CD4-positive, alpha-beta T cell (primary cell): ENCODE measurements at regions of chr4 and their contacts with region 1.

Region 1: DNA sequence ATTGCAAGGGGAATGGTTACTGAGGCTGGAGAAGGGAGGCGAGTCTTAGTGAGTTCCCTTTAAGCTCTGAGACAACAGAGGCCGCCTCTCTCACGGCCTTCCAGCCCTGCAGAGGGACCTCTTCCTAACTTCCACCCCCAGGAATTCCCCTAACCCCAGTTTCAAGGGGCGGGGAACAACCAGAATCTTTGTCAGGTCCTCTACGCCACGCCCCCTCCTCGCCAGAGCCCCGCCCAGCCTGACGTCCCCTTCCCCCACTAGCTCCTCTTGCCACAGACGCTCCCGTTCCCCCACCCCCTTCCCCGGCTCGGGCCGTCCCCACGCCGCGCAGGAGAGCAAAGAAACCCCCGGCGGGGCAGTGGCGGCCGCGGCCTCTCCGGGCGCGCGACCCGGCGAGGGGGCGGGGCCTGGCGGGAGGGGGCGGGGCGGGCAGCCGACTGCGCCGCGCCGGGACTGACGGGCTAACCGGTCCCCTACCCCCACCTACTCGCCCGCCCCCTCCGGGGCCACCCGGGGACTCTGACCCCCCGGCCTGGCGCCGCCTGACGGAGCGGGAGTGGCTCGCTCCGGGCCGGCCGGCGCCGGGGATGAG is 12.3 kb upstream of the TMEM156 start:
- DNase-seq: peak; percentile 87 to 99 (median 94)
- ATAC-seq: peak; percentile 83
- H3K4me3 ChIP-seq: peak overlapping the region; percentile 72
- H3K4me3 Mint-ChIP-seq: peak overlapping the region; percentile 98
- H3K27ac ChIP-seq: peak overlapping the region; percentile 85 to 86
- H3K27ac Mint-ChIP-seq: peak overlapping the region; percentile 97
- H3K4me1 ChIP-seq: peaks cover 36% of the 10 kb centered on the region
- H3K4me1 Mint-ChIP-seq: peaks cover 54% of the 10 kb centered on the region
- H3K27me3 ChIP-seq: no peaks in the 10 kb centered on the region
- H3K27me3 Mint-ChIP-seq: no peaks in the 10 kb centered on the region
- CTCF ChIP-seq: no peak

Region 2: GRCh38 chr4:38902695-38903094 is 141.8 kb before region 1 on chr4:
- CTCF ChIA-PET with region 1: interaction called, 9 read pairs
- POLR2A ChIA-PET with region 1: interaction called, 4 read pairs
- intact Hi-C with region 1: loop called in 1 of 2 experiments (anchors 1 kb)
- DNase-seq: peak in 3 of 14 experiments; percentile 64 to 67 (median 66)
- ATAC-seq: peak; percentile 89
- H3K4me3 ChIP-seq: no peak overlapping the region
- H3K4me3 Mint-ChIP-seq: no peak overlapping the region
- H3K27ac ChIP-seq: no peak overlapping the region
- H3K27ac Mint-ChIP-seq: no peak overlapping the region
- H3K4me1 ChIP-seq: no peaks in the 10 kb centered on the region
- H3K4me1 Mint-ChIP-seq: no peaks in the 10 kb centered on the region
- H3K27me3 ChIP-seq: no peaks in the 10 kb centered on the region
- H3K27me3 Mint-ChIP-seq: peaks cover 4% of the 10 kb centered on the region
- CTCF ChIP-seq: peak; percentile 70

Region 3: GRCh38 chr4:38985410-38986100 is 58.9 kb before region 1 on chr4:
- CTCF ChIA-PET with region 1: interaction called, 5 read pairs
- POLR2A ChIA-PET with region 1: interaction called, 9 read pairs
- intact Hi-C with region 1: loop called in 1 of 2 experiments (anchors 5 kb)
- DNase-seq: peak in 4 of 14 experiments; percentile 14 to 28 (median 20)
- ATAC-seq: peak; percentile 49
- H3K4me3 ChIP-seq: peak overlapping the region; percentile 17
- H3K4me3 Mint-ChIP-seq: peak overlapping the region; percentile 44
- H3K27ac ChIP-seq: peak overlapping the region in 1 of 2 donors; percentile 26
- H3K27ac Mint-ChIP-seq: peak overlapping the region; percentile 62
- H3K4me1 ChIP-seq: peaks cover 11% of the 10 kb centered on the region
- H3K4me1 Mint-ChIP-seq: peaks cover 49% of the 10 kb centered on the region
- H3K27me3 ChIP-seq: no peaks in the 10 kb centered on the region
- H3K27me3 Mint-ChIP-seq: no peaks in the 10 kb centered on the region
- CTCF ChIP-seq: no peak

Region 4: DNA sequence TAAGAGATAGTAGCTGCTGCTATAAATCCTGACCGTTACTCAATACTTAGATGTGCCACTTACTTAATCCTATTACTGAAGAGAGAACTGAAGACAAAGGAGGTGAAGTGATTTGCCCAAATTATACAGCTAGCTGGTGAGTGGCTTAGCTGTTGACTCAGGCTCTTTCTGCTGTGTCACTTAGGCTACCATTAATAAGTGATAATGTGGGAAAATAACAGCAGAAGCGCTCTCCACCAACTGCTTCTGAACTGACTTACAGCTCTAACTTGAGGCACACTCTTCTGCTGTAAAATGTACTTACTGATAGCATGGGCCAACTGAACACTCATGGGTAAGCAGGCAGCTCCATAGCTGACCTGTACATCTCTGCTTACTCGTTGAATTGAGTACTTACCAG is 10.0 kb after region 1 on chr4:
- CTCF ChIA-PET with region 1: interaction called, 9 read pairs
- POLR2A ChIA-PET with region 1: interaction called, 23 read pairs
- intact Hi-C with region 1: no loop called
- DNase-seq: no peak
- ATAC-seq: no peak
- H3K4me3 ChIP-seq: no peak overlapping the region
- H3K4me3 Mint-ChIP-seq: no peak overlapping the region
- H3K27ac ChIP-seq: no peak overlapping the region
- H3K27ac Mint-ChIP-seq: no peak overlapping the region
- H3K4me1 ChIP-seq: no peaks in the 10 kb centered on the region
- H3K4me1 Mint-ChIP-seq: peaks cover 48% of the 10 kb centered on the region
- H3K27me3 ChIP-seq: no peaks in the 10 kb centered on the region
- H3K27me3 Mint-ChIP-seq: no peaks in the 10 kb centered on the region
- CTCF ChIP-seq: no peak

Region 5: DNA sequence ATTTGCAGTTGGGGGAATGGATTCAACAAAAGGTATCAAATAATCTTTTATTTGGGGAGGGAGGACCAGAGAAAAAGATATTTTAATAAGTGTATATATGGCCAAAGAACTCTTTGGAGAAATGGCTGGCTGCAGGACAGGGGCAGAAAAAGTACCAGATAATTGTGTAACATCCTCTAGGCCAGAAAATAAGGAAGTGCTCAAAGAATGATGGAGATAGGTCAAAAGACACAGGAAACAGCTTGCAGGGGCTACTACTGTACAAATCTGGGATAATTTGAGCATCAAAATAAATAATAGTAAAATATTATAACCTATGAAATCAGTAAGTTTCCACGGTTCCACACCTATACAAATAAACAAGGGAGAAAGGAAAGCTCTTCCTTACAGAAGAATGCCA is 52.4 kb after region 1 on chr4:
- CTCF ChIA-PET with region 1: no interaction called
- POLR2A ChIA-PET with region 1: interaction called, 3 read pairs
- intact Hi-C with region 1: loop called in 1 of 2 experiments (anchors 5 kb)
- DNase-seq: no peak
- ATAC-seq: no peak
- H3K4me3 ChIP-seq: no peak overlapping the region
- H3K4me3 Mint-ChIP-seq: no peak overlapping the region
- H3K27ac ChIP-seq: no peak overlapping the region
- H3K27ac Mint-ChIP-seq: no peak overlapping the region
- H3K4me1 ChIP-seq: no peaks in the 10 kb centered on the region
- H3K4me1 Mint-ChIP-seq: no peaks in the 10 kb centered on the region
- H3K27me3 ChIP-seq: no peaks in the 10 kb centered on the region
- H3K27me3 Mint-ChIP-seq: no peaks in the 10 kb centered on the region
- CTCF ChIP-seq: no peak

Region 6: DNA sequence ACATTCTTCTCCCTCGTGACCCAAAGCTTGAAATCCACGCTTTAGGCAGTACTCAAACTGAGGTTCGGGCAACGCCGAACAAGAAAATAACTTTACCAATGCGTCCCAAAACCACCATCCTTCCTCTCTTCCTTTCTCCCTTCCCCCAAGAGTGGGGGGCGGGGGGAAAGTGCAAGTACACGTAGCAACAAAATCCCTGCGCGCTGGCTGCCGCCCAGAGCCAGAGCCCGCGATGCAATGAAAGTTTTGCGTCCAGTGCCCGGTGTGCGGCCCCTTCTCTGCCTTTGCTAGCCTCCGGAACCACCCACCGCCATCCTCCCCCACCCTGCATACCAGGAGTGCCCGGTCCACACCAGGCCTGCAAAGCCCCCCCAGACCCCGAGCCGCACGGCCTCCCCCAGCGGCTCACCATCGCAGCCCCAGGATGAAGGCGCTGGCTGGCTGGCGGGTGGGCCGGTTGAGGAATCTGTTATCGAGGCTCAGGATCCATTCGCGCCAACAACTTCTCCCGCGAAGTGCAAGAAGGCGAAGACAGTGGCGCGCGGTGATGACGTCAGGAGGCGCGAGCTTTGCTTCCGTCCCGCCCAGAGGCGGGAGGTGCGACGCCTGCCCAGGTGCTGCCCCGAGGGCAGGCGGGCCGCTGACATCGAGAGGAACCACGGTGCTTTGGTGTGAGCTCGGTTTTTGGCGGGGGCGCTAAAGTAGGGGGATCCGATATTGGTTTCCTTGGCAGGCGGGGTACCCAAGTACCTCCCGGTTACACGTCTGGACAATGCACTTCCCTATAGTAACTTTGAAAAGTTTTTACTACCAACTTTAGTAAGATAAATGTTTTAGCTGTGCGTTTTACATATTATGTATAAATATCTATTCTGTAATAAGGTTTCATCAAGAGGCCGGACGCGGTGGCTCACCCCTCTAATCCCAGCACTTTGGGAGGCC is 321.6 kb after region 1 on chr4 and contains the start of gene RFC1:
- CTCF ChIA-PET with region 1: no interaction called
- POLR2A ChIA-PET with region 1: no interaction called
- intact Hi-C with region 1: loop called in 1 of 2 experiments (anchors 2 kb)
- DNase-seq: peak; percentile 85 to 97 (median 91)
- ATAC-seq: peak; percentile 95
- H3K4me3 ChIP-seq: peak within 1 kb of the TSS; percentile 98
- H3K4me3 Mint-ChIP-seq: peak within 1 kb of the TSS; percentile 93
- H3K27ac ChIP-seq: peak within 1 kb of the TSS; percentile 49 to 81
- H3K27ac Mint-ChIP-seq: peak within 1 kb of the TSS; percentile 91
- H3K4me1 ChIP-seq: peaks cover 30% of the 10 kb centered on the region
- H3K4me1 Mint-ChIP-seq: peaks cover 37% of the 10 kb centered on the region
- H3K27me3 ChIP-seq: no peaks in the 10 kb centered on the region
- H3K27me3 Mint-ChIP-seq: no peaks in the 10 kb centered on the region
- CTCF ChIP-seq: no peak
- total RNA-seq, gene RFC1: 97.0 to 104 TPM

Region 7: GRCh38 chr4:39527273-39528060 is 483.0 kb after region 1 on chr4 and contains the start of gene UGDH:
- CTCF ChIA-PET with region 1: no interaction called
- POLR2A ChIA-PET with region 1: no interaction called
- intact Hi-C with region 1: loop called in 1 of 2 experiments (anchors 5 kb)
- DNase-seq: peak; percentile 73 to 96 (median 89)
- ATAC-seq: peak; percentile 98
- H3K4me3 ChIP-seq: peak within 1 kb of the TSS; percentile 98
- H3K4me3 Mint-ChIP-seq: peak within 1 kb of the TSS; percentile 98
- H3K27ac ChIP-seq: peak within 1 kb of the TSS; percentile 52 to 65
- H3K27ac Mint-ChIP-seq: peak within 1 kb of the TSS; percentile 88
- H3K4me1 ChIP-seq: peaks cover 22% of the 10 kb centered on the region
- H3K4me1 Mint-ChIP-seq: peaks cover 22% of the 10 kb centered on the region
- H3K27me3 ChIP-seq: no peaks in the 10 kb centered on the region
- H3K27me3 Mint-ChIP-seq: no peaks in the 10 kb centered on the region
- CTCF ChIP-seq: no peak
- total RNA-seq, gene UGDH: 3.5 to 3.7 TPM